Activated B cell treated with CpG ODN at 0.5 μM for 24 hours (primary cell): ENCODE measurements at regions of chr14 and their contacts with region 1.

Region 1: GRCh38 chr14:76918751-76919543 is 92.7 kb downstream of the LRRC74A start:
- DNase-seq: no peak
- ATAC-seq: no peak
- H3K4me3 Mint-ChIP-seq: no peak overlapping the region
- H3K27ac Mint-ChIP-seq: no peak overlapping the region
- H3K4me1 Mint-ChIP-seq: peaks cover 25% of the 10 kb centered on the region
- H3K27me3 Mint-ChIP-seq: peaks cover 15% of the 10 kb centered on the region
- CTCF ChIP-seq: no peak

Region 2: GRCh38 chr14:76375947-76376404 is 543.0 kb before region 1 on chr14 and contains the start of gene ESRRB:
- CTCF ChIA-PET with region 1: no interaction called
- POLR2A ChIA-PET with region 1: no interaction called
- intact Hi-C with region 1: no loop called
- DNase-seq: no peak
- ATAC-seq: no peak
- H3K4me3 Mint-ChIP-seq: no peak within 1 kb of the TSS
- H3K27ac Mint-ChIP-seq: no peak within 1 kb of the TSS
- H3K4me1 Mint-ChIP-seq: peaks cover 3% of the 10 kb centered on the region
- H3K27me3 Mint-ChIP-seq: peaks cover 64% of the 10 kb centered on the region
- CTCF ChIP-seq: no peak
- total RNA-seq, gene ESRRB: 0.11 and 0.15 TPM in 2 replicates

Region 3: GRCh38 chr14:76937181-76938091 is 18.5 kb after region 1 on chr14:
- CTCF ChIA-PET with region 1: interaction called, 4 read pairs
- POLR2A ChIA-PET with region 1: interaction called, 12 read pairs
- intact Hi-C with region 1: no loop called
- DNase-seq: no peak
- ATAC-seq: no peak
- H3K4me3 Mint-ChIP-seq: no peak overlapping the region
- H3K27ac Mint-ChIP-seq: no peak overlapping the region
- H3K4me1 Mint-ChIP-seq: no peaks in the 10 kb centered on the region
- H3K27me3 Mint-ChIP-seq: no peaks in the 10 kb centered on the region
- CTCF ChIP-seq: no peak

Region 4: GRCh38 chr14:77053046-77053841 is 134.3 kb after region 1 on chr14:
- CTCF ChIA-PET with region 1: interaction called, 63 read pairs
- POLR2A ChIA-PET with region 1: no interaction called
- intact Hi-C with region 1: no loop called
- DNase-seq: peak; percentile 79
- ATAC-seq: peak; percentile 90
- H3K4me3 Mint-ChIP-seq: no peak overlapping the region
- H3K27ac Mint-ChIP-seq: peak overlapping the region; percentile 24
- H3K4me1 Mint-ChIP-seq: peaks cover 8% of the 10 kb centered on the region
- H3K27me3 Mint-ChIP-seq: no peaks in the 10 kb centered on the region
- CTCF ChIP-seq: peak; percentile 74